CD14-positive monocyte (primary cell): ENCODE measurements at regions of chr15 and their contacts with region 1.

Region 1: GRCh38 chr15:99788183-99788582 is 54.9 kb upstream of the LYSMD4 start:
- DNase-seq: no peak
- H3K4me3 ChIP-seq: no peak overlapping the region
- H3K4me3 Mint-ChIP-seq: no peak overlapping the region
- H3K27ac ChIP-seq: no peak overlapping the region
- H3K27ac Mint-ChIP-seq: no peak overlapping the region
- H3K4me1 ChIP-seq: no peaks in the 10 kb centered on the region
- H3K4me1 Mint-ChIP-seq: peaks cover 1% of the 10 kb centered on the region
- H3K27me3 ChIP-seq: no peaks in the 10 kb centered on the region
- H3K27me3 Mint-ChIP-seq: peaks cover 0 to 2% (median 2%) of the 10 kb centered on the region in 3 donors
- CTCF ChIP-seq: no peak

Region 2: GRCh38 chr15:99749386-99749785 is 38.8 kb before region 1 on chr15:
- intact Hi-C with region 1: no loop called
- DNase-seq: no peak
- H3K4me3 ChIP-seq: no peak overlapping the region
- H3K4me3 Mint-ChIP-seq: no peak overlapping the region
- H3K27ac ChIP-seq: no peak overlapping the region
- H3K27ac Mint-ChIP-seq: no peak overlapping the region
- H3K4me1 ChIP-seq: no peaks in the 10 kb centered on the region
- H3K4me1 Mint-ChIP-seq: no peaks in the 10 kb centered on the region
- H3K27me3 ChIP-seq: no peaks in the 10 kb centered on the region
- H3K27me3 Mint-ChIP-seq: peaks cover 0 to 7% (median 0%) of the 10 kb centered on the region in 3 donors
- CTCF ChIP-seq: no peak

Region 3: DNA sequence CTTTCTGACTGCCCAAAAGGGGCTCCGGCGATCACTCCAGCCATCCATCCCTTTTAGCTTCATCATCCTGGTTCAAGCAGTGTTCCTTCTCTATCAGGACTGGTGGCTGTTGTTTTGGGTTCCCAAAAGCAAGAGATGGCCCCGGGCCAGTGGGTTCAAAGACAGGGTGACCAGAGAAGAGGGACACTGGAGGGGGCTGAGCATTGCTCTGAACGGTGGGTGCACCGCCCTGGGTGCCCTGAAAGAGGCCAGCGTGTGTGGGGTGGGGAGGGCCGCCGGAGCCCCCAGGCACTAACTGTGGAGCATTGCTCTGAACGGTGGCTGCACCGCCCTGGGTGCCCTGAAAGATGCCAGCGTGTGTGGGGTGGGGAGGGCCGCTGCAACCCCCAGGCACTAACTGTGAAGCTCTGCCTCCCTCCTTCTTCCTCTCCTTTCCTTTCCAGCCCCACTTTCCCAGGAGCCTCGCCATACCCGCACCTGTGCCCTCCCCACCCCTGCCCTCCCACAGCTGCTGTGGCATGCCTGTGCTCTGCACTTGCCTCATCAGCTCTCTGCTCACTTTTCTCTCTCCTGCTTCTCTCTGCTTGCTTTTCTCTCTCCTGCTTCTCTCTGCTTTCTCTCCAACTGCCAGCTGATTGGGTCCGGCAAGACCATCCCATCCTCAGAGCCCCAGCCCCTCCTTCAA is 1977.7 kb after region 1 on chr15:
- intact Hi-C with region 1: loop called in 1 of 2 experiments (anchors 10 kb)
- DNase-seq: no peak
- H3K4me3 ChIP-seq: no peak overlapping the region
- H3K4me3 Mint-ChIP-seq: no peak overlapping the region
- H3K27ac ChIP-seq: no peak overlapping the region
- H3K27ac Mint-ChIP-seq: peak overlapping the region in 1 of 7 donors; percentile 3
- H3K4me1 ChIP-seq: no peaks in the 10 kb centered on the region
- H3K4me1 Mint-ChIP-seq: no peaks in the 10 kb centered on the region
- H3K27me3 ChIP-seq: no peaks in the 10 kb centered on the region
- H3K27me3 Mint-ChIP-seq: peaks cover 0 to 2% (median 0%) of the 10 kb centered on the region in 3 donors
- CTCF ChIP-seq: no peak

Region 4: DNA sequence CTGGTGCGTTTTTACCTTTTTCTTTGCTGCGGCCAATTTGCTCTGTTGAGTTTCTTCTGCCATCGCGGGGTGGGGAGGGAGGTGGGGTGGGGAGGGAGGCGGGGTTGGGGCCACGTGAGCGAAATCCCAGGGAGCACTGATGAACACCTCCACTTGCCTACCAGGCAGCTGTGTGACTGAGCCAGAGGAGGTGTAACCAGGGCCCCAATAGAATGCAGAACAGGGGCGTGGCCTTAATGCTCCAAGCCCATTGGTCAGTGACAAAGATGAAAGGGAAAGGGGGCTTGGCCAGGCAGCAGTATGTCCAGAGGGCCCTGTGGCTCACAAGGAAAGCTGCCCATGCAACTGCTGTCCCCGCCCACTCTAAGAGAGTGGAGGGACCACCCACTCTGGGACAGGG is 1993.7 kb after region 1 on chr15:
- intact Hi-C with region 1: loop called in 1 of 2 experiments (anchors 10 kb)
- DNase-seq: no peak
- H3K4me3 ChIP-seq: no peak overlapping the region
- H3K4me3 Mint-ChIP-seq: no peak overlapping the region
- H3K27ac ChIP-seq: no peak overlapping the region
- H3K27ac Mint-ChIP-seq: no peak overlapping the region
- H3K4me1 ChIP-seq: no peaks in the 10 kb centered on the region
- H3K4me1 Mint-ChIP-seq: no peaks in the 10 kb centered on the region
- H3K27me3 ChIP-seq: no peaks in the 10 kb centered on the region
- H3K27me3 Mint-ChIP-seq: peaks cover 2 to 6% (median 5%) of the 10 kb centered on the region in 3 donors
- CTCF ChIP-seq: no peak